A549 (cell line): ENCODE measurements at regions of chr12 and their contacts with region 1.

Region 1: DNA sequence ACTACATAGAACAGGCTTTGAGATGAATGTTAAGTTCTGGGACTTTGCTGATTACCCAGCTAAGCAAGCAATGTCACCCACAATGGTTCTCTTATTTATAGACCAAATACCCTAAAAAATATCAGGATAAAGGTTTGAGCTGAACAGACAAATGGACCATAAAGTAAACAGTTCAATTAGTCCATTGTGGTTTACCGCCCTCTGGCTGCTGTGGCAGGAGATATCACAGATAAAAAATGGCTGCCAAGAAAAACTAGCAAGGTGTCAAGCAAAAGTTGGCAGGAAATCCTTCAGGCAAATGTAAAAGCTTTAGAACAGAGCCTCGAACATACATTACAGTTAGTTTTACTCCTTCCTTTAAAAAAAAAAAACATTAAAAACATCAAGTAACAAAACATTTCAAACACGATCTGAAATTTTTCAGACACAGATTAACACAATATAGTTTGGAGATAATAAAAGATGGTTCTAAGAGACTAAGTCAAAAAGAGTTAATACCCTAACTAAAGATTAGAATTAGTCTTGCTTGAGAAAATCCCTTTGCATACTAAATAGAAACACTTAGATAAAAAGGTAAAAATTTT is 41.3 kb downstream of the MED13L start:
- DNase-seq: peak; percentile 33 to 63
- ATAC-seq: peak; percentile 62 to 81; a peak in 4 of 6 replicates
- H3K4me3 ChIP-seq: no peak overlapping the region
- H3K27ac ChIP-seq: no peak overlapping the region
- H3K4me1 ChIP-seq: peaks cover 32% of the 10 kb centered on the region
- CTCF ChIP-seq: peak; percentile 91
- EP300 ChIP-seq: no peak
- POLR2A ChIP-seq: no peak
- RAD21 ChIP-seq: peak; percentile 85 to 87

Region 2: GRCh38 chr12:115983226-115983798 is 252.9 kb before region 1 on chr12:
- CTCF ChIA-PET with region 1: interaction called, 13 read pairs
- POLR2A ChIA-PET with region 1: no interaction called
- DNase-seq: peak; percentile 30 to 58
- ATAC-seq: peak; percentile 84 to 89
- H3K4me3 ChIP-seq: no peak overlapping the region
- H3K27ac ChIP-seq: no peak overlapping the region
- H3K4me1 ChIP-seq: no peaks in the 10 kb centered on the region
- CTCF ChIP-seq: peak; percentile 57
- EP300 ChIP-seq: no peak
- POLR2A ChIP-seq: no peak
- RAD21 ChIP-seq: peak; percentile 66 to 81

Region 3: DNA sequence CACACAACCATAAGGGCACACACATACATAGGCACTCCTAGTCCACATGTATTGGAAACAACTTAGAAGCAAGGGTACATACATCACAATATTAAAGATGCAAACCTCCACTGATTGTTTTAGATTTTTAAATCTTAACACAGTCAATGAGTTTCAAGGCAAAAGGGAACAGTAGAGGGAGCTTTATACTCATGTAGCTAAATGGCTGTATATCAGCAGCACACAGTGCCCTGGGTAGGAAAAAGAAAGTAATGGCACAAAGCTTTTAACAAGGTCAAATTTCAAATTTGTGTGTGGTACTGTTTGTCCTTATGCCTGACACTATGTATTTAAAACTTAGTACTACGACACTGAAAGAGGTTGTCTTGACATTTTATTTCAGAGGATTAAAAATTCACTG is 220.7 kb before region 1 on chr12:
- CTCF ChIA-PET with region 1: interaction called, 11 read pairs
- POLR2A ChIA-PET with region 1: no interaction called
- DNase-seq: peak; percentile 23 to 52
- ATAC-seq: peak; percentile 84 to 90
- H3K4me3 ChIP-seq: no peak overlapping the region
- H3K27ac ChIP-seq: no peak overlapping the region
- H3K4me1 ChIP-seq: peaks cover 11% of the 10 kb centered on the region; the same call in 1 of the 3 replicates
- CTCF ChIP-seq: peak; percentile 79
- EP300 ChIP-seq: no peak
- POLR2A ChIP-seq: no peak
- RAD21 ChIP-seq: peak; percentile 82 to 84

Region 4: DNA sequence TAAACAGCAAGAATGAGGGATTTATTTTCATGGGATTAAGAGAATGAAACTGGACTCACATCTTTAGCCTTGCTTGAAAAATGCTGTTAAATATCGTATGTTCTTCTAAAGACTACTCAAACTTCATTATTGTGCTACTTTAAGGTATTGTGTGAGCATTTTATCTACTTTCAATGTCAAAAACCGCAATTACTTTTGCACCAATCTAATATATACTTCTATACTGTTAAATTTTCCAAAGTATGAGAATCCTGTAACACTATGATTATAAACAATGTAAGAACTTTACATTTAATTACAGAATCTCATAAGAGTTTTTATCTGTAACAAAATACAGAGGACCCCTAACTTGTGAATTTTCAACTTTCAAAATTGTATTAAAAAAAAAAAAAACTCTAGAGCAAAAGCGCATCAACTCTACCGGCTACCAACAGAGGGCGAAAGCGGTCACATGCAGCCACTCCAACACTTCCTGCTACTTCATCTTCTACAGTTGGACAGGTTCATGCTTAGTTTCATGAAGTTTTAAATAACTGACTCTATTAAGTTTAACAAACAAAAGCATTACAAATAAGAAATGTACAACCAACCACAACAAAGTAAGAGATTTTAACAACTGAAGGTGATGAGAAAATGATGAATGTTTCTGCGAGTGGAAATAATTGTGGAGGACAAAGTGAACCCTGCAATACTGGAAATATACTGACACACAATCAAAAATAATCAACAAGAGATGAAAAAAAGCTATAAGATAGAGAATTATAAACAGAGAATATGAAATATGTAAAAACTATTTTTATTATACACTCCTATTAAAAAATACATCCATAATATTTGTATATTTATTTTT is 169.6 kb before region 1 on chr12:
- CTCF ChIA-PET with region 1: interaction called, 10 read pairs
- POLR2A ChIA-PET with region 1: no interaction called
- DNase-seq: peak; percentile 34 to 72
- ATAC-seq: peak; percentile 75 to 81; a peak in 5 of 6 replicates
- H3K4me3 ChIP-seq: no peak overlapping the region
- H3K27ac ChIP-seq: no peak overlapping the region
- H3K4me1 ChIP-seq: peaks cover 14% of the 10 kb centered on the region; the same call in 2 of the 3 replicates
- CTCF ChIP-seq: peak; percentile 88
- EP300 ChIP-seq: no peak
- POLR2A ChIP-seq: no peak
- RAD21 ChIP-seq: peak; percentile 72 to 77

Region 5: GRCh38 chr12:116164250-116165035 is 71.8 kb before region 1 on chr12:
- CTCF ChIA-PET with region 1: no interaction called
- POLR2A ChIA-PET with region 1: no interaction called
- DNase-seq: no peak
- ATAC-seq: peak; percentile 18 to 54; a peak in 5 of 6 replicates
- H3K4me3 ChIP-seq: no peak overlapping the region
- H3K27ac ChIP-seq: peak overlapping the region in 1 of 2 experiments; percentile 4; a peak in 1 of 6 replicates
- H3K4me1 ChIP-seq: peaks cover 79% of the 10 kb centered on the region
- CTCF ChIP-seq: no peak
- EP300 ChIP-seq: no peak
- POLR2A ChIP-seq: no peak
- RAD21 ChIP-seq: no peak

Region 6: DNA sequence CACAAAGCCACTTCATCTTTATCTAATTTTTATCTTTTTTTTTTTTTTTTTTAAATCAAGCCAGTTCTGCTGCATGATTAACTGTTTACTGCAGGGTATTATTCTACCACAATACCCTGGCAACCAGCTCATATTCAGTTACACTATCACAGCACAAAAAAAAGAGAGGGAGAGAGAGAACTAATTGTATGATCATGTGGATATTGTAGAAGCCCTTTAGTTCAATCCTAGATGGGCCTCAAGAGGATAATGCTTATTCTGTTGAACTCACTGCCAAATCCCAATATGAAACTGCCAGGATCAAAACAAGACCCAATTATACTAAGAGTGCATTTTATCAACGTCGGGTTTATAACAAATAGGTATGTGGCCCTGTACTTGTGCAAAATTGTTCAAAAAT is 10.2 kb before region 1 on chr12:
- CTCF ChIA-PET with region 1: interaction called, 26 read pairs
- POLR2A ChIA-PET with region 1: no interaction called
- DNase-seq: no peak
- ATAC-seq: no peak
- H3K4me3 ChIP-seq: no peak overlapping the region
- H3K27ac ChIP-seq: no peak overlapping the region
- H3K4me1 ChIP-seq: peaks cover 11% of the 10 kb centered on the region
- CTCF ChIP-seq: no peak
- EP300 ChIP-seq: no peak
- POLR2A ChIP-seq: no peak
- RAD21 ChIP-seq: no peak

Region 7: GRCh38 chr12:116495274-116495673 is 259.0 kb after region 1 on chr12:
- CTCF ChIA-PET with region 1: no interaction called
- POLR2A ChIA-PET with region 1: no interaction called
- DNase-seq: peak; percentile 41 to 47
- ATAC-seq: peak; percentile 35 to 41; a peak in 4 of 6 replicates
- H3K4me3 ChIP-seq: no peak overlapping the region
- H3K27ac ChIP-seq: peak overlapping the region; percentile 12 to 74; a peak in 3 of 6 replicates
- H3K4me1 ChIP-seq: peaks cover 35% of the 10 kb centered on the region
- CTCF ChIP-seq: no peak
- EP300 ChIP-seq: no peak
- POLR2A ChIP-seq: no peak
- RAD21 ChIP-seq: no peak